ENCODE measurements at regions of chr11 and their contacts with region 1.

Region 1: DNA sequence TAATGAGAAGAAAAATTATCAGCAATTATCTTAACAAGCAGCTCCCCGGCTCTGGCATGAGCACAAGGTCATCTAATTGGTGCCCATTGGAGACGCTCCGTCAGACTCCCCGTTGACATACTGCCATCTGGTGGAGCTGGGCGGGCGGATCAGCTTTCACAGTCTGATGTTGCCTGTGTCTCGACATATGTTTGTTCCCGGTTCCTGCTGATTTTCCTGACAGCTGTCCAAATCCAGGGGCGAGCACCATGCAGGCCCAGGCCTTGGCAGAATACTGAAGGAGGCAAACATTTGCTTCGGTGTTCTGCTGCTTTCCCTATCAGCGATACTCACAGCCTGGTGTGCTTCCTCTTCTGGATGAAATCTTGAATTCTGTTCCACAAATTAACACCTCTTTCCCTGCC is 43.8 kb upstream of the BARX2 start:
- DNase-seq: peak; percentile 32
- H3K4me3 ChIP-seq: no peak overlapping the region
- H3K27ac ChIP-seq: no peak overlapping the region
- H3K27me3 ChIP-seq: no peaks in the 10 kb centered on the region
- CTCF ChIP-seq: peak; percentile 94

Region 2: DNA sequence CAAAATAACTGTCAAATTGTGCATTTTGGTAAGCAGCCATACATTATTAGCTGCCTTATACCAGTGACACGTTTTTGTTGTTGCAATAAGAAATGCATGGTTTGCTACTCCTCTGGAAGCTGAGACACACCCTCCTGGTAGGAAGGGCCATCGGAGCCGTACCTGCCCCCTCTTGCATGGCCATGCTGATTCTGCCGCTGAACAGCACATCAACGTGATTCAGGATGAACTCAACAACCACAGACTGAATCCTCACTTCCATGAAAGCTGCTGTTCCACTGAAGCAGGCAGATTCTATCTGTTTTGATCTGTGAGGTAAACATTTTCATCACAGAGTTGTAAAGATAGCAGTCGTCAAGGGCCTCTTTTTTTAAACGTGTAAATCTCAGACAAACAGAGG is 350.6 kb before region 1 on chr11:
- CTCF ChIA-PET with region 1: no interaction called
- POLR2A ChIA-PET with region 1: no interaction called
- DNase-seq: no peak
- H3K4me3 ChIP-seq: no peak overlapping the region
- H3K27ac ChIP-seq: no peak overlapping the region
- H3K27me3 ChIP-seq: no peaks in the 10 kb centered on the region
- CTCF ChIP-seq: no peak

Region 3: GRCh38 chr11:129061466-129062194 is 270.2 kb before region 1 on chr11:
- CTCF ChIA-PET with region 1: no interaction called
- POLR2A ChIA-PET with region 1: no interaction called
- DNase-seq: no peak
- H3K4me3 ChIP-seq: no peak overlapping the region
- H3K27ac ChIP-seq: no peak overlapping the region
- H3K27me3 ChIP-seq: no peaks in the 10 kb centered on the region
- CTCF ChIP-seq: no peak

Region 4: DNA sequence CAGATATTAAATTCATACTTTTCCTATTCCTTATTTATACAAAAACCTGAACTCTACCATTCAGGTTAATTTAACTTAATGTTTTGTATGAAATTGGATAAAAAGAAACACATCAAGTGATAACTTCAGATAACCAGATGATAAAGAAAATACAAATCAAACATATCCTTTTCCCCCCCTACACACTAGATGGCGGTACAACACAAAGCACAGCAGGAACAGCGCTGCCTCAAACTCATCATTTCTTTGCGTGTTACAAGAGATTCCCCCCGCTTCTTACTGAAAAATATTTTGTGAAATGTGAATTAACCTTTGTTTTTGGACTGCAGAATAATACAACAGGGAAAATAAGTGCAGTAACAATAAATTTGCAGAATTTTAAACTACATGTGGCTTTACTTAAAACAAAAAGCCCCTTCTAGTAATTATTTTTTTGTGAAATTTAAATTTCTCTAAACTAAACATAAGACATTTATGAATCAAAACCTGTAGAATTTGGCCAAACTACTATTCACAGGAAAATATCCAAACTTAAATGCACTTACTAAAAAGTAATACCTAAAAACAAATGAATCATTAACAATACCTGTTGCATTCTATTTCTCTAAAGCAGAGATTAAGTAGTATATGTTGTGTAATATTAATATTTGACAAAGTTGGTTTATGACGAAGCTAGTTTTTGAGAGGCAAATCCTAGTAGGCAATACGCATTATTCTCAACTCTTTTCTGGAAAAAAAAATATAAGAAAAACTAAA is 214.1 kb before region 1 on chr11:
- CTCF ChIA-PET with region 1: interaction called, 116 read pairs
- POLR2A ChIA-PET with region 1: no interaction called
- DNase-seq: peak; percentile 64
- H3K4me3 ChIP-seq: no peak overlapping the region
- H3K27ac ChIP-seq: no peak overlapping the region
- H3K27me3 ChIP-seq: no peaks in the 10 kb centered on the region
- CTCF ChIP-seq: peak; percentile 96

Region 5: GRCh38 chr11:129131316-129131715 is 200.6 kb before region 1 on chr11:
- CTCF ChIA-PET with region 1: interaction called, 10 read pairs
- POLR2A ChIA-PET with region 1: no interaction called
- DNase-seq: no peak
- H3K4me3 ChIP-seq: no peak overlapping the region
- H3K27ac ChIP-seq: no peak overlapping the region
- H3K27me3 ChIP-seq: no peaks in the 10 kb centered on the region
- CTCF ChIP-seq: no peak

Region 6: DNA sequence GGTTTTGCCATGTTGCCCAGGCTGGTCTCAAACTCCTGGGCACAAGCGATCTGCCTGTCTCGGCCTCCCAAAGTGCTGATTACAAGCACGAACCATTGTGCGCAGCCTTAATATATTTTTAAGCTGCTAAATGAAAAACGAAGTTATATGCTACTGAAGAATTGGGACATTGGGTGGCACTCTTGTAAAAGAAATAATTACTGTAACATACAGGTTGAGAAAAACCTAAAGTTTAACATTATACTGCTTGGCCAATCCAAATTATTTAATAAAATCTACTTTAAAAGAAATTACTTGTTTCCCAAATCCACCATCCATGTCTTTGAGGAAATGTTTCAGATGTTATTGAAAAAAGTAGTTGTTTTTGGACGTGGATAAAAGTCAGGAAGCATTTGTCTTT is 101.9 kb before region 1 on chr11:
- CTCF ChIA-PET with region 1: interaction called, 14 read pairs
- POLR2A ChIA-PET with region 1: no interaction called
- DNase-seq: no peak
- H3K4me3 ChIP-seq: no peak overlapping the region
- H3K27ac ChIP-seq: no peak overlapping the region
- H3K27me3 ChIP-seq: no peaks in the 10 kb centered on the region
- CTCF ChIP-seq: no peak

Measured in AG04450 (cell line).